PC-3 (cell line): ENCODE measurements at regions of chr4 and their contacts with region 1.

Region 1: GRCh38 chr4:36054750-36055467 is 189.4 kb downstream of the ARAP2 start:
- DNase-seq: peak; percentile 16
- ATAC-seq: peak; percentile 62
- H3K4me3 ChIP-seq: no peak overlapping the region
- H3K27ac ChIP-seq: no peak overlapping the region
- H3K4me1 ChIP-seq: no peaks in the 10 kb centered on the region
- H3K27me3 ChIP-seq: no peaks in the 10 kb centered on the region
- CTCF ChIP-seq: no peak

Region 2: GRCh38 chr4:36111172-36111571 is 56.3 kb after region 1 on chr4:
- CTCF ChIA-PET with region 1: no interaction called
- POLR2A ChIA-PET with region 1: no interaction called
- intact Hi-C with region 1: loop called (anchors 5 kb)
- DNase-seq: no peak
- ATAC-seq: peak; percentile 15; the same call in 1 of the 2 replicates
- H3K4me3 ChIP-seq: no peak overlapping the region
- H3K27ac ChIP-seq: no peak overlapping the region
- H3K4me1 ChIP-seq: 0 out of 2 replicates have a peak, but pooled peaks cover 3% of the 10 kb centered on the region
- H3K27me3 ChIP-seq: no peaks in the 10 kb centered on the region
- CTCF ChIP-seq: no peak